Natural killer cell (primary cell): ENCODE measurements at regions of chr17 and their contacts with region 1.

Region 1: GRCh38 chr17:77331301-77331864 is 190.6 kb downstream of the SEC14L1 start:
- DNase-seq: peak; percentile 93 to 97
- ATAC-seq: peak; percentile 88 to 95 (median 93)
- H3K4me3 ChIP-seq: peak overlapping the region; percentile 26
- H3K4me3 Mint-ChIP-seq: peak overlapping the region; percentile 82
- H3K27ac ChIP-seq: peak overlapping the region; percentile 68
- H3K27ac Mint-ChIP-seq: peak overlapping the region; percentile 83 to 96
- H3K4me1 ChIP-seq: peaks cover 60% of the 10 kb centered on the region
- H3K4me1 Mint-ChIP-seq: peaks cover 29 to 37% of the 10 kb centered on the region in 2 donors
- H3K27me3 ChIP-seq: no peaks in the 10 kb centered on the region
- H3K27me3 Mint-ChIP-seq: no peaks in the 10 kb centered on the region
- CTCF ChIP-seq: peak; percentile 88

Region 2: GRCh38 chr17:77280980-77281903 is 50.1 kb before region 1 on chr17:
- intact Hi-C with region 1: no loop called
- DNase-seq: peak; percentile 58 to 87
- ATAC-seq: peak; percentile 90 to 92 (median 91)
- H3K4me3 ChIP-seq: peak overlapping the region; percentile 43
- H3K4me3 Mint-ChIP-seq: peak overlapping the region; percentile 89
- H3K27ac ChIP-seq: no peak overlapping the region
- H3K27ac Mint-ChIP-seq: peak overlapping the region; percentile 88 to 91
- H3K4me1 ChIP-seq: peaks cover 28% of the 10 kb centered on the region
- H3K4me1 Mint-ChIP-seq: peaks cover 16 to 23% of the 10 kb centered on the region in 2 donors
- H3K27me3 ChIP-seq: peaks cover 21% of the 10 kb centered on the region
- H3K27me3 Mint-ChIP-seq: peaks cover 24 to 31% of the 10 kb centered on the region in 2 donors
- CTCF ChIP-seq: no peak

Region 3: GRCh38 chr17:77345260-77345910 is 14.0 kb after region 1 on chr17:
- intact Hi-C with region 1: loop called (anchors 1 kb)
- DNase-seq: no peak
- ATAC-seq: no peak
- H3K4me3 ChIP-seq: no peak overlapping the region
- H3K4me3 Mint-ChIP-seq: no peak overlapping the region
- H3K27ac ChIP-seq: no peak overlapping the region
- H3K27ac Mint-ChIP-seq: no peak overlapping the region
- H3K4me1 ChIP-seq: peaks cover 41% of the 10 kb centered on the region
- H3K4me1 Mint-ChIP-seq: peaks cover 50 to 51% of the 10 kb centered on the region in 2 donors
- H3K27me3 ChIP-seq: no peaks in the 10 kb centered on the region
- H3K27me3 Mint-ChIP-seq: no peaks in the 10 kb centered on the region
- CTCF ChIP-seq: no peak

Region 4: GRCh38 chr17:77372444-77373298 is 41.3 kb after region 1 on chr17:
- intact Hi-C with region 1: loop called (anchors 5 kb)
- DNase-seq: peak; percentile 75 to 76
- ATAC-seq: peak; percentile 54 to 71 (median 66)
- H3K4me3 ChIP-seq: peak overlapping the region; percentile 72
- H3K4me3 Mint-ChIP-seq: peak overlapping the region; percentile 81
- H3K27ac ChIP-seq: peak overlapping the region; percentile 44
- H3K27ac Mint-ChIP-seq: peak overlapping the region; percentile 72 to 82
- H3K4me1 ChIP-seq: peaks cover 60% of the 10 kb centered on the region
- H3K4me1 Mint-ChIP-seq: peaks cover 43 to 58% of the 10 kb centered on the region in 2 donors
- H3K27me3 ChIP-seq: no peaks in the 10 kb centered on the region
- H3K27me3 Mint-ChIP-seq: peaks cover 0 to 2% of the 10 kb centered on the region in 2 donors
- CTCF ChIP-seq: no peak

Region 5: DNA sequence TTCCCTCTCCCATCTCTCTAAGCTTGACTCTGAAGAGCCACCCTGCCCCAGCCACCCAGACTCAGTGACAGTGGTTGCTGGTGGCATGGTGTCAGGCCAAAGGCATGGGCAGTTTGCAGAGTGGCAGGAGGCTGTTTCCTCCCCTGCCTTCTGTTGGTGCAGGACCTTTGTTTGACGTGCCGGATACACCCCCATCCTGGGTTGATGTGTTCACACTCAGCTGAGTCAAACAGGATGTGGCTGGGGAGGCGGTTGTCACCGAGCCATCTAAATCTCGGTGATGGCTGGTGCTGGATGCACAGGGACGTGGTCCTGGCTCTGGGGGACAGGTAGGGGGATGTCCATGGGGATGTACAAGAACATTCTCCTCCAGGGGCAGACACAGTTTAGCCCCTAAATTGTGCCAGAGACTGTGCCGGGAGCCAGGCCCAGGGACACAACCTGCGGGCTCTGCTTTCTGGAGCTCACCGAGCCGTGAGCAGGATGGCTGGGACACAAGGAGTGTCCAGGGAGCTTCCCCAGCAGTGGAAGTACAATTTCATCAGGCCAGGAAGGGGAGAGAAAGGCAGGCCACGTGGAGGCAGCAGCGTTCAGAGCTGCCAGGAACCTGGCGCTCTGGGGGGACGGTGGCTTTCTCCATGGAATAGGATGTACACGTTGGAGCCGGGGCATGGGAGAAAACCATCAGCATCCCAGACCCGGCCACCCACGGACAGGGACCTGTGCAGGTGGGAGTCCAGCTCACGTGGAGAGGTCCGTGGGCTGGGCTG is 73.6 kb after region 1 on chr17:
- intact Hi-C with region 1: loop called (anchors 1 kb)
- DNase-seq: peak; percentile 82 to 93
- ATAC-seq: peak; percentile 82 to 88 (median 86)
- H3K4me3 ChIP-seq: peak overlapping the region; percentile 54
- H3K4me3 Mint-ChIP-seq: peak overlapping the region; percentile 80
- H3K27ac ChIP-seq: peak overlapping the region; percentile 81
- H3K27ac Mint-ChIP-seq: peak overlapping the region; percentile 92 to 98
- H3K4me1 ChIP-seq: peaks cover 100% of the 10 kb centered on the region
- H3K4me1 Mint-ChIP-seq: peaks cover 83 to 96% of the 10 kb centered on the region in 2 donors
- H3K27me3 ChIP-seq: no peaks in the 10 kb centered on the region
- H3K27me3 Mint-ChIP-seq: no peaks in the 10 kb centered on the region
- CTCF ChIP-seq: no peak

Region 6: GRCh38 chr17:77444984-77445759 is 113.8 kb after region 1 on chr17:
- intact Hi-C with region 1: loop called (anchors 1 kb)
- DNase-seq: peak; percentile 77 to 98
- ATAC-seq: peak; percentile 61 to 84 (median 72)
- H3K4me3 ChIP-seq: peak overlapping the region; percentile 27
- H3K4me3 Mint-ChIP-seq: peak overlapping the region; percentile 67
- H3K27ac ChIP-seq: peak overlapping the region; percentile 90
- H3K27ac Mint-ChIP-seq: peak overlapping the region; percentile 86
- H3K4me1 ChIP-seq: peaks cover 98% of the 10 kb centered on the region
- H3K4me1 Mint-ChIP-seq: peaks cover 74 to 87% of the 10 kb centered on the region in 2 donors
- H3K27me3 ChIP-seq: no peaks in the 10 kb centered on the region
- H3K27me3 Mint-ChIP-seq: no peaks in the 10 kb centered on the region
- CTCF ChIP-seq: no peak

Region 7: GRCh38 chr17:77494664-77495435 is 163.5 kb after region 1 on chr17:
- intact Hi-C with region 1: loop called (anchors 1 kb)
- DNase-seq: peak; percentile 77 to 88
- ATAC-seq: peak; percentile 85 to 96 (median 90)
- H3K4me3 ChIP-seq: no peak overlapping the region
- H3K4me3 Mint-ChIP-seq: peak overlapping the region; percentile 37
- H3K27ac ChIP-seq: no peak overlapping the region
- H3K27ac Mint-ChIP-seq: peak overlapping the region; percentile 41 to 80
- H3K4me1 ChIP-seq: peaks cover 43% of the 10 kb centered on the region
- H3K4me1 Mint-ChIP-seq: peaks cover 7 to 21% of the 10 kb centered on the region in 2 donors
- H3K27me3 ChIP-seq: no peaks in the 10 kb centered on the region
- H3K27me3 Mint-ChIP-seq: no peaks in the 10 kb centered on the region
- CTCF ChIP-seq: peak; percentile 99